ENCODE measurements at regions of chr2 and their contacts with region 1.

Region 1: GRCh38 chr2:189142893-189143759 is 36.4 kb downstream of the COL5A2 start:
- DNase-seq: peak; percentile 16
- ATAC-seq: peak; percentile 99
- H3K4me3 ChIP-seq: no peak overlapping the region
- H3K27ac ChIP-seq: no peak overlapping the region
- H3K4me1 ChIP-seq: no peaks in the 10 kb centered on the region
- H3K27me3 ChIP-seq: no peaks in the 10 kb centered on the region
- CTCF ChIP-seq: peak; percentile 88 to 97 (median 89); a peak in 5 of 6 replicates
- EP300 ChIP-seq: no peak
- POLR2A ChIP-seq: no peak
- RAD21 ChIP-seq: peak; percentile 76

Region 2: DNA sequence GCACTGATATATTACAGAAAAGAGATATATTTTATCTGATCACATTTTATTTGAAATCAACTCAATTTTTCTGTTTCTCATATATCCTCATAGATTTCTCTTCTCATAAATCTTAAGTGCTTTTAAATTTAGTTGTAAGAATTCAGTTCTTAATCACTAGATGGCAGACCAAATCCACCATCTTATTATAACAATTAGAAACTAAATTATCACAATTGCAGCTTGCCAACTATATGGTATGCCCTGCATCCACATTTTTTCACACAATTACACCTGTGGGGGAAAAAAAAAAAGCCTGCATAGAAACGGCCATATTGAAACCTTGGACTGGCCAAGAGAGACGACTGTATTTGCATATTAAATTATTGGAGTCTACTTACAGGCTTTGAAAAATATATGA is 28.0 kb before region 1 on chr2:
- CTCF ChIA-PET with region 1: interaction called, 39 read pairs
- POLR2A ChIA-PET with region 1: no interaction called
- RAD21 ChIA-PET with region 1: interaction called, 6 read pairs
- SMC1A ChIA-PET with region 1: interaction called, 12 read pairs
- in situ Hi-C with region 1: no loop called
- intact Hi-C with region 1: no loop called
- DNase-seq: no peak
- ATAC-seq: peak; percentile 20; the same call in 2 of the 3 replicates
- H3K4me3 ChIP-seq: no peak overlapping the region
- H3K27ac ChIP-seq: no peak overlapping the region
- H3K4me1 ChIP-seq: no peaks in the 10 kb centered on the region
- H3K27me3 ChIP-seq: no peaks in the 10 kb centered on the region
- CTCF ChIP-seq: no peak; a peak in 1 of 6 replicates
- EP300 ChIP-seq: no peak
- POLR2A ChIP-seq: no peak
- RAD21 ChIP-seq: no peak

Region 3: GRCh38 chr2:189129971-189130370 is 13.2 kb before region 1 on chr2:
- CTCF ChIA-PET with region 1: interaction called, 50 read pairs
- POLR2A ChIA-PET with region 1: no interaction called
- RAD21 ChIA-PET with region 1: interaction called, 3 read pairs
- SMC1A ChIA-PET with region 1: interaction called, 11 read pairs
- in situ Hi-C with region 1: no loop called
- intact Hi-C with region 1: no loop called
- DNase-seq: no peak
- ATAC-seq: no peak
- H3K4me3 ChIP-seq: no peak overlapping the region
- H3K27ac ChIP-seq: no peak overlapping the region
- H3K4me1 ChIP-seq: no peaks in the 10 kb centered on the region
- H3K27me3 ChIP-seq: no peaks in the 10 kb centered on the region
- CTCF ChIP-seq: no peak
- EP300 ChIP-seq: no peak
- POLR2A ChIP-seq: no peak
- RAD21 ChIP-seq: no peak

Region 4: GRCh38 chr2:189287982-189288521 is 144.9 kb after region 1 on chr2:
- CTCF ChIA-PET with region 1: interaction called, 33 read pairs
- POLR2A ChIA-PET with region 1: no interaction called
- RAD21 ChIA-PET with region 1: interaction called, 35 read pairs
- SMC1A ChIA-PET with region 1: interaction called, 45 read pairs
- in situ Hi-C with region 1: no loop called
- intact Hi-C with region 1: loop called (anchors 1 kb)
- DNase-seq: no peak
- ATAC-seq: peak; percentile 89
- H3K4me3 ChIP-seq: no peak overlapping the region
- H3K27ac ChIP-seq: no peak overlapping the region
- H3K4me1 ChIP-seq: no peaks in the 10 kb centered on the region
- H3K27me3 ChIP-seq: no peaks in the 10 kb centered on the region
- CTCF ChIP-seq: peak; percentile 30 to 54 (median 33); a peak in 4 of 6 replicates
- EP300 ChIP-seq: no peak
- POLR2A ChIP-seq: no peak
- RAD21 ChIP-seq: peak; percentile 64

Region 5: DNA sequence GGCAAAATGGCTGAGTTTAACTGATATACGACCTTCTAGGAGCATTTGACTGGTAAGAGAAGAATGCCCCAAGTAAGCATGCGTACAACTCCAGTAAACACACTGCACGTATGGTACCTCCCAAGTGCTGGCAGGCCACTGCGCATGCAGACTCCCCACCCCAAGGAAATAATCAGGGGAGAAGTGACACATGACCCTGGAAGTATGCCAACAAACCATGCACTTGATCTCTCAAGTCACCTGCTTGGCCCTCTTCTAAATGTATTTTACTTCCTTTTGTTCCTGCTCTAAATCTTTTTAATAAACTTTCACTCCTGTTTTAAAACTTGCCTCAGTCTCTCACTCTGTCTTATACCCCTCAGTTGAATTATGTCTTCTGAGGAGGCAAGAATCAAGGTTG is 166.2 kb after region 1 on chr2:
- CTCF ChIA-PET with region 1: no interaction called
- POLR2A ChIA-PET with region 1: no interaction called
- RAD21 ChIA-PET with region 1: no interaction called
- SMC1A ChIA-PET with region 1: no interaction called
- in situ Hi-C with region 1: no loop called
- intact Hi-C with region 1: no loop called
- DNase-seq: no peak
- ATAC-seq: no peak
- H3K4me3 ChIP-seq: no peak overlapping the region
- H3K27ac ChIP-seq: no peak overlapping the region
- H3K4me1 ChIP-seq: no peaks in the 10 kb centered on the region
- H3K27me3 ChIP-seq: no peaks in the 10 kb centered on the region
- CTCF ChIP-seq: no peak
- EP300 ChIP-seq: no peak
- POLR2A ChIP-seq: no peak
- RAD21 ChIP-seq: no peak

Measured in GM12878 (cell line).